GM18951 (cell line): ENCODE measurements at regions of chr6 and their contacts with region 1.

Region 1: DNA sequence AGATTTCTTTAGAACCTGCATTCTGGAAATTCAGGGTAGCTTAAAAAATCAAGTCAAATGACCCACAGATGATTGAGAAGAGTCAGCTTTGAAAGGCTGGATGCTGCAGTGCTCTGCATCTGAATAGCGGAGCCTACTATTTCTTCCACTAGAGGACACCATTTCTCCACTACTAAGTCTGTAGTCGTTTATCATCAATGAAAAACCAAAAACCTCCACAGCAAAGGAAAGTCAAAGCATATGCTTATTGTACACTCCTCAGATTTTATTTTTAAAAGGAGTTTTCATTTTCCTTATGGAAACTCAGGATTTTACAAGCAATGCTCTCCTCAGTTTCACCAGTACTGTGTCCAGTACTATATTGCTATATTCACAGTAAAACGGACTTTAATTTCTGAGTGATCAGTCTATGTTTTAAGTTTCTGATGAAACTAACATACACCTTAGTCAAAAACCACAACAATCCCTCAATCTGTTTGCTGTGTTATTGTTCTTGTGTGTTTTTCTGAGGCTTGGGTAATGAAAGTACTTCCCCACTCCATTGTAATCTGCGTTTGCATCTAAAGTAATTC is 50.5 kb upstream of the ENPP5 start:
- POLR2A ChIP-seq: no peak

Region 2: GRCh38 chr6:46407776-46408530 is 186.6 kb after region 1 on chr6:
- in situ Hi-C with region 1: loop called (anchors 5 kb)
- POLR2A ChIP-seq: no peak

Region 3: DNA sequence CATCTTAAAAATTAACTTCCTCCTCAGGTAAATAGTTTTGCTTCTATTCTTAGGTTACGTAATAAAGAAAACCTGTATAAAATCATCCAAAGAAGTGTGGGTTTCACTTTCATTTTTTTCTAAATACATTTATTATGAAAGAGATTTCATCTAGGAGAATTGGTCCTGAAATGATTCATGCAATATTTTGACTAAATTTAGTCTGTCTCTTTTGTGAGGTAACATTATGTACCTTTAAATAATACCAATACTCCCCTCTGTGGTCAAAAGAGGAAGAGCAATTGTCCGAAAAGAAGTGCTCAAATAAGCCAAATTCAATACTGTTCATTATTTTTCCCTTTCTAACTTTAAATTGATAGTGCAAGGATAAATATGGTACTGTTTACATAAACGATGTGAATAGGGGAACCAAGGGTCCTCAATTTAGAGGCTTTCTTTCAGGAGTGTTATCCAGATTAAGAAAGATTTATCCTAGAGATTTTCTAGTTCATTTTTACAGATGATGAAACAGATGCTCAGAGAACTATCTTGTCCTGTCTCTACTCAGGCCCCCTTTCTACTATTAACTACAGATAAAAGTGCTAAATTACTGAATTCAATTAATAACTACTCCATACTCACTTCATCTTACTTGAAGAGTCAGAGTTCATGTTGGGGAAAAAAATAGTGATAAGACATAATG is 405.1 kb after region 1 on chr6:
- in situ Hi-C with region 1: loop called (anchors 25 kb)
- POLR2A ChIP-seq: no peak